Activated CD8-positive, alpha-beta T cell treated with anti-CD3 and anti-CD28 coated beads for 36 hours (primary cell): ENCODE measurements at regions of chr11 and their contacts with region 1.

Region 1: GRCh38 chr11:13238879-13239514 is 38.6 kb upstream of the BMAL1 start:
- DNase-seq: peak; percentile 65
- ATAC-seq: peak; percentile 64
- H3K4me3 Mint-ChIP-seq: no peak overlapping the region
- H3K27ac Mint-ChIP-seq: no peak overlapping the region
- H3K4me1 Mint-ChIP-seq: peaks cover 2% of the 10 kb centered on the region
- H3K27me3 Mint-ChIP-seq: peaks cover 13% of the 10 kb centered on the region
- CTCF ChIP-seq: peak; percentile 95

Region 2: DNA sequence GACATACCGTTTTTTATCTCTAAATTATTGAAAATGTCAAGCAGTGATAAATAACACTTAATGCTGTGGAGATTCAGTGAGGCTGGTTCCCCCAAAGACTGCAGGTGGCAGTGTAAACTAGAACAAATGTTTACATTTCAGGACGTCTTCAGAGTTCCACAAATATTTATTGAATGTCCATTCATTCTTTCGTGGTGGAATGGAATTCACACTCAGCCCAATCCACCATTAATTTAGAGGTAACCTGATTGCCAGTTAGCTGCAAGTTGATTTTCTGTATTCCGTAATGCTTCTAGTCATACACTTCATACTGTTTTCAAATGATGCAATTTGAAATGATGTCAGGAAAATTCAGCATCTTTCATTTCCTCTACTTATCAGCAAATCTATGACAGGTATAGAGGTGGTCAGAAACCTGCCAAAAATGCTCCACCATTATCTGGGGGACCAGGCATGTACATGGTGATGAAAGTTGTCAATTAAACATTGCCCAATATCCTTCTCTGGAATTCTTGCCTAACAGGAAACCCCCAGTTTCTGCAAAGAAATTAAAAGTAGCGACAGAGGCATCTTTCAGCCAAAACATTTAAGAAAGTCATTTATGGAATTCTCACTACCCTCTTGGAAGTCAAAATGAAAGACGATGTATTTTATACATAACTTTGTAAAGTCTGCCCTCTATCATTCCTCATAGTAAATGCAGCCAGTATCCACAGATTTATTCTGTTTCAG is 55.7 kb before region 1 on chr11:
- CTCF ChIA-PET with region 1: interaction called, 5 read pairs
- POLR2A ChIA-PET with region 1: no interaction called
- intact Hi-C with region 1: loop called (anchors 5 kb)
- DNase-seq: peak; percentile 34
- ATAC-seq: no peak
- H3K4me3 Mint-ChIP-seq: no peak overlapping the region
- H3K27ac Mint-ChIP-seq: no peak overlapping the region
- H3K4me1 Mint-ChIP-seq: peaks cover 5% of the 10 kb centered on the region
- H3K27me3 Mint-ChIP-seq: peaks cover 9% of the 10 kb centered on the region
- CTCF ChIP-seq: peak; percentile 59

Region 3: GRCh38 chr11:13249996-13250395 is 11.0 kb after region 1 on chr11:
- CTCF ChIA-PET with region 1: interaction called, 34 read pairs
- POLR2A ChIA-PET with region 1: interaction called, 3 read pairs
- intact Hi-C with region 1: no loop called
- DNase-seq: peak; percentile 13
- ATAC-seq: no peak
- H3K4me3 Mint-ChIP-seq: no peak overlapping the region
- H3K27ac Mint-ChIP-seq: no peak overlapping the region
- H3K4me1 Mint-ChIP-seq: no peaks in the 10 kb centered on the region
- H3K27me3 Mint-ChIP-seq: peaks cover 14% of the 10 kb centered on the region
- CTCF ChIP-seq: no peak

Region 4: DNA sequence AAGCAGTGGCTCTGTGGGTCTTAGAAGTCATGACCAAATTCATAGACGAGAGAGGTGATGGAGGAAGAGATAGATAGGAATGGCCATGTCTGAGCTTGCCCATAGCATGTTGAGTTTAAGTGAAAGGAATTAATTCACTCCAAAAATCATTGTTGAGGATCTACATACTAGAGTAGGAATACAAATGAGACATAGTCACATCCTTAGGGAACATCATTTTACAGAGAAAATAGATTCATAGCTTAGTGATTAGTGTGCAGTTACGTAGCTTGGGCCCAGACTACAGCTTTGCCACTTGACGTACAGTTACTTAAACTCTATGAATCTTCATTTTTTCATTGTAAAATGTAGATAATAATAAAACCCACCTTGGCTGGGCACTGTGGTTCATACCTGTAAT is 17.2 kb after region 1 on chr11:
- CTCF ChIA-PET with region 1: interaction called, 34 read pairs
- POLR2A ChIA-PET with region 1: interaction called, 3 read pairs
- intact Hi-C with region 1: no loop called
- DNase-seq: no peak
- ATAC-seq: no peak
- H3K4me3 Mint-ChIP-seq: no peak overlapping the region
- H3K27ac Mint-ChIP-seq: no peak overlapping the region
- H3K4me1 Mint-ChIP-seq: peaks cover 3% of the 10 kb centered on the region
- H3K27me3 Mint-ChIP-seq: no peaks in the 10 kb centered on the region
- CTCF ChIP-seq: no peak